ENCODE measurements at regions of chr14 and their contacts with region 1.

Region 1: DNA sequence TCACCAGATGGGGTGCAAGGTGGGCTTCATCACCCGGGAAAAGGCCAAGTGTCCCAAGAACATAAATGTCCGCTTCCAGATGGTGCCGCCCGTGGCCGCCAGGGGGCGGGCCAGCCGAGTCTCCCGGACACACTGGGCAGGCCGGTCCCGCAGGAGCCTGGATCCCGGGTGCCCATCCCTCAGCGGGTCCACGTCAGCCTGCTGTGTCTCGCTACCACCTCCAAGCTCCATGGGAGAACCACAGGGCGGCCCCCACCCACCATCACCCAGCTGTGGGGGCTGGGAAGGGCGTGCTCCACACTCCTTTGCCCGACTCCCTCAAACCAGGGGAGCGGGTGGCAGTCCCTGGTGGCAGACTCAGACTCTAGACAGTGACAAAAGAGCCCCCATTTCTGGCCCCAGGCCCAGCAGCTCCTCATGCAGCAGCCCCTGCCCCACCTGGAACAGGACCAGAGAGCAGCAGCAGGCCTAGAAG is 22.0 kb upstream of the NUDT14 start:
- DNase-seq: no peak
- H3K4me3 ChIP-seq: no peak overlapping the region
- H3K27ac ChIP-seq: no peak overlapping the region
- H3K4me1 ChIP-seq: peaks cover 46% of the 10 kb centered on the region
- H3K27me3 ChIP-seq: no peaks in the 10 kb centered on the region
- CTCF ChIP-seq: peak; percentile 77 to 89 (median 83)
- POLR2A ChIP-seq: no peak

Region 2: DNA sequence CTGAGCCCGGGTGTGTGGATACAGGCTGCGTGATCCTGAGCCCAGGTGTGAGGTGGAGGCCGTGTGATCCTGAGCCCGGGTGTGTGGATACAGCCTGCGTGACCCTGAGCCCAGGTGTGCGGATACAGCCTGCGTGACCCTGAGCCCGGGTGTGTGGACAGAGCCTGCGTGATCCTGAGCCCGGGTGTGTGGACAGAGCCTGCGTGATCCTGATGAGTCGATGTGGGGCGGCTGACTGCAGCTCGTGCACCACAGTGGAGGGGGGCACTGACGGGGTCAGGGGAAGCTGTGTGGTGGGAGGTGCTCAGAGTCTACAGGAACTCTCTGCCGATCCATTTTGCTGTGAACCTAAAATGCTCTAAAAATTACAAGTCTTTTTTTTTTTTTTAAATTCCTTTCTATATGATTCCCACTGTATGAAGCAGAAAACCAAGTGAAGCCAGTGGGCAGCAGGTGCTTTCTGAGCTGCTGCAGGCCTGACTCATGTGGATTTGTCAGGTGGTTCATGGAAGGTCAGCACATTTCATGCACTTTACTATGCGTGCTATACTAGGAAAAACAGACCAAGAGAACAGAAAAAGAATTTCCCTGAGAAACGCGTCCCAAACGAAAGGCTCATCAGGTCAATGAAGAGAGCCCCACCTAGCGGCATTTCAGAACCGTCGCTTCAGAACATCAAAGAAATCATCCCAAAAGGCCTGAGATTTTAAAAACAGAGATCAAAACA is 78.4 kb after region 1 on chr14:
- intact Hi-C with region 1: loop called (anchors 10 kb)
- DNase-seq: no peak
- H3K4me3 ChIP-seq: no peak overlapping the region
- H3K27ac ChIP-seq: no peak overlapping the region
- H3K4me1 ChIP-seq: peaks cover 6% of the 10 kb centered on the region
- H3K27me3 ChIP-seq: no peaks in the 10 kb centered on the region
- CTCF ChIP-seq: peak in 2 of 3 experiments; percentile 21 to 27
- POLR2A ChIP-seq: no peak

Region 3: GRCh38 chr14:105351920-105352851 is 149.1 kb after region 1 on chr14:
- intact Hi-C with region 1: loop called (anchors 2 kb)
- DNase-seq: no peak
- H3K4me3 ChIP-seq: no peak overlapping the region
- H3K27ac ChIP-seq: no peak overlapping the region
- H3K4me1 ChIP-seq: peaks cover 5% of the 10 kb centered on the region
- H3K27me3 ChIP-seq: no peaks in the 10 kb centered on the region
- CTCF ChIP-seq: peak; percentile 47 to 82 (median 70)
- POLR2A ChIP-seq: no peak

Region 4: GRCh38 chr14:105709281-105710118 is 506.4 kb after region 1 on chr14:
- intact Hi-C with region 1: no loop called
- DNase-seq: no peak
- H3K4me3 ChIP-seq: no peak overlapping the region
- H3K27ac ChIP-seq: no peak overlapping the region
- H3K4me1 ChIP-seq: no peaks in the 10 kb centered on the region
- H3K27me3 ChIP-seq: no peaks in the 10 kb centered on the region
- CTCF ChIP-seq: no peak
- POLR2A ChIP-seq: no peak

Measured in vagina (tissue), 2 donors.